Esophagus squamous epithelium (tissue), 5 donors: ENCODE measurements at regions of chr16 and their contacts with region 1.

Region 1: GRCh38 chr16:9650284-9650683 is 531.9 kb downstream of the GRIN2A start:
- DNase-seq: no peak
- H3K4me3 ChIP-seq: no peak overlapping the region
- H3K27ac ChIP-seq: no peak overlapping the region
- H3K4me1 ChIP-seq: no peaks in the 10 kb centered on the region
- H3K27me3 ChIP-seq: peaks cover 0 to 31% (median 0%) of the 10 kb centered on the region in 4 donors
- CTCF ChIP-seq: no peak
- POLR2A ChIP-seq: no peak

Region 2: GRCh38 chr16:9900576-9900975 is 250.3 kb after region 1 on chr16:
- intact Hi-C with region 1: no loop called
- DNase-seq: no peak
- H3K4me3 ChIP-seq: no peak overlapping the region
- H3K27ac ChIP-seq: no peak overlapping the region
- H3K4me1 ChIP-seq: no peaks in the 10 kb centered on the region
- H3K27me3 ChIP-seq: no peaks in the 10 kb centered on the region
- CTCF ChIP-seq: no peak
- POLR2A ChIP-seq: no peak

Region 3: GRCh38 chr16:10181196-10182162 is 531.2 kb after region 1 on chr16:
- intact Hi-C with region 1: loop called (anchors 10 kb)
- DNase-seq: no peak
- H3K4me3 ChIP-seq: peak overlapping the region; percentile 15 to 62 (median 40)
- H3K27ac ChIP-seq: peak overlapping the region in 1 of 4 donors; percentile 9
- H3K4me1 ChIP-seq: peaks cover 26 to 37% (median 28%) of the 10 kb centered on the region in 3 donors
- H3K27me3 ChIP-seq: peaks cover 7 to 71% (median 13%) of the 10 kb centered on the region in 4 donors
- CTCF ChIP-seq: peak; percentile 71 to 90 (median 84)
- POLR2A ChIP-seq: no peak